ENCODE measurements at regions of chr19 and their contacts with region 1.

Region 1: GRCh38 chr19:17859533-17860330 is at the start of gene RPL18A:
- DNase-seq: peak; percentile 100
- H3K4me3 Mint-ChIP-seq: peak within 1 kb of the TSS; percentile 92
- H3K27ac Mint-ChIP-seq: peak within 1 kb of the TSS; percentile 96
- H3K4me1 Mint-ChIP-seq: peaks cover 37% of the 10 kb centered on the region
- H3K27me3 Mint-ChIP-seq: no peaks in the 10 kb centered on the region
- total RNA-seq, gene RPL18A: 4,021 to 4,160 TPM

Region 2: DNA sequence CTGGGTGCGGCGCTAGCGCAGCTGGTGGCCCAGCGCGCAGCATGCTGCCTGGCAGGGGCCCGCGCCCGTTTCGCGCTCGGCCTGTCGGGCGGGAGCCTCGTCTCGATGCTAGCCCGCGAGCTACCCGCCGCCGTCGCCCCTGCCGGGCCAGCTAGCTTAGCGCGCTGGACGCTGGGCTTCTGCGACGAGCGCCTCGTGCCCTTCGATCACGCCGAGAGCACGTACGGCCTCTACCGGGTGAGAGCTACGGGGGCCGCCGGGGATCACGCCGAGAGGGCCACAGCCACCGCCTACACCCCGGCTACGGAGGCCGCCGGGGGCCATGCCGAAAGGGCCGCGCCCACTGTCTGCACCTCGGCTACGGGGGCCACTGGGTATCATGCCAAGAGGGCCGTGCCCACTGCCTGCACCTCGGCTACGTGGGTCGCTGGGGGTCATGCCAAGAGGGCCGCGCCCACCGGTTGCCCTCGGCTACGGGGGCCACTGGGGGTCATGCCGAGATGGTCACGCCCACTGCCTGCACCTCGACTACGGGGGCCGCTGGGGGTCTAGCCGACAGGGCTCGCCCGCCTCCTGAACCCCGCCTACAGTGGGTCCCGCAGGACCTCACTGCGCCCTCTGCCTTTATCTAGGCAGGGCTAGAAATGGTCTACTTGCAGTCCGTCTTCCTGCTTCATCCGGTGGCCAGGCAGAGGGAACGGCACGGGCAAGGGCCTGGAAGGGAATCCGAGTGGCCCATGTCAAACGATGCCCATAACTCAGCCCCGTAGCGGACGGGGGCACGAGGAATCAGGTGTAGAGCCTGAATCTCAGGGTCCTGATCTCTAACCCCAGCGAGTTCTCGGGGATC is 347.8 kb before region 1 on chr19:
- CTCF ChIA-PET with region 1: no interaction called
- intact Hi-C with region 1: loop called (anchors 5 kb)
- DNase-seq: peak; percentile 85
- H3K4me3 Mint-ChIP-seq: peak overlapping the region; percentile 93
- H3K27ac Mint-ChIP-seq: peak overlapping the region; percentile 73
- H3K4me1 Mint-ChIP-seq: peaks cover 37% of the 10 kb centered on the region
- H3K27me3 Mint-ChIP-seq: no peaks in the 10 kb centered on the region

Region 3: DNA sequence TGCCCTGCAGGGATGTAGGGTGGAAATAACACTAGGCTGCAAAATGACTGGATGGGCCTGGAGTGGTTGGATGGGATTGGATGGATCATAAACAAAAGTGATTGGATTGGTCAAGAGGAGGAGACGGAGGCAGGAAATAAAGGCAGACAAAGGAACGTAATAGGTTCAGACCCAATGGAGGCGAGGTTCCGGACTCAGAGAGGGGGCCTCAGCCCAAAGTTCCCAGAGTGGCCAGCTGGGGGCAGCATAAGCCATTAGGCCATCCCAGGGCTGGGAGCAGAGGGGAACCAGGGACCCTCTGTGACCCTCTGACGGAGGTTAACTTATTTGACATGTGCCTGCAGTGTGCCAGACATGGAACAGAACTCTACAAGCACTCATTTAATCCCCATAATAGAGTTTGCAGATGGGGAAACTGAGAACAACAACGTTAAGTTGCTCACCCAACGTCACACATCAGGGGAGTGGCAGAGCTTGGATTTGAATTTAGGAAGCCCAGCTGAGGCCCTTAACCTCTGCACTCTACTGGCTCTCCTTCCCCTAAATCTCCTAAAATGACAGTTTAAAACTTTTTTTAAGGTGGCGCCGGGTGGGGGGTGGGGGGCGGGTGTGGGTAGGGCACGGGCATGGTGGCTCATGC is 155.8 kb before region 1 on chr19:
- CTCF ChIA-PET with region 1: interaction called, 5 read pairs
- intact Hi-C with region 1: loop called (anchors 1 kb)
- DNase-seq: peak; percentile 82
- H3K4me3 Mint-ChIP-seq: no peak overlapping the region
- H3K27ac Mint-ChIP-seq: no peak overlapping the region
- H3K4me1 Mint-ChIP-seq: no peaks in the 10 kb centered on the region
- H3K27me3 Mint-ChIP-seq: peaks cover 2% of the 10 kb centered on the region

Region 4: GRCh38 chr19:17718947-17719711 is 140.6 kb before region 1 on chr19 and contains the start of gene MAP1S:
- CTCF ChIA-PET with region 1: no interaction called
- intact Hi-C with region 1: no loop called
- DNase-seq: peak; percentile 66
- H3K4me3 Mint-ChIP-seq: peak within 1 kb of the TSS; percentile 84
- H3K27ac Mint-ChIP-seq: peak within 1 kb of the TSS; percentile 76
- H3K4me1 Mint-ChIP-seq: peaks cover 34% of the 10 kb centered on the region
- H3K27me3 Mint-ChIP-seq: no peaks in the 10 kb centered on the region
- total RNA-seq, gene MAP1S: 46.8 to 51.8 TPM

Region 5: DNA sequence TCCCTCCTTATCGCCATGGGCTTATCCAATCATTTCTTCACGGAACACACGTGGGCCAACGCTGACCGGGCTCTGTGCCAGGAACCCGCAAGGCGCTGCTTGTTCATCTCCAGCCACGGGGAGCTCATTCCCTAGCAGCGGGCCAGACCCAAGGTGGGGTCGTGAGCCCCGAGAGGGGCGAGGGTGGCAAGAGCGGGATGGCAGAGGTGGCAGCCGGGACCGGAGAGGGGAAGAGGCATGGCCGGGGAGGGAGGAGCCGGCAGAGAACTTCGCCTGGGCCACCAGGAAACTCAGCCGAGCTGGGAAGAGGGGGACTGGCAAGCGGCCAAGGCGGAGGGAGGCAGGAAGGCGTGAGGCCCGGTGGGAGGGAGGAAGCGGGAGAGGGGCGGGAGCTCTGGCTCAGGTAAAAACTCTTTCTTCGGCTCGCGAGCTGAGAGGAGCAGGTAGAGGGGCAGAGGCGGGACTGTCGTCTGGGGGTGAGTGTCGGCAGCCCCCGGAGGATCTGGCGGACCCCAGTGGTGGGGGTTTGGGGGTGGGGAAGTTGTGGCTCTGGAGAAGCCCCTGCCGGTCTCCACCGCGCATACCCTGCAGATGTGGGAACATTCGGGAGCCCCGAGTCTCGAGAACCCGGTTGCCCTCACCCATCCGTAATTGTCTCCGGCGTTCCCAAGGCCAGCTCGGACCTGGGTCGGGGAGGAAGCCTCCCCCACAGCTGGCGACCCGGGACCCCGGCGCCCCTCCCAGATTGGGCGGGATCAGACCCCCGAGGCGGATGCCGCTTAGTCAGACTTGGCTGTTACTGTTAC is 64.8 kb before region 1 on chr19 and contains the start of gene B3GNT3:
- CTCF ChIA-PET with region 1: interaction called, 5 read pairs
- intact Hi-C with region 1: loop called (anchors 1 kb)
- DNase-seq: no peak
- H3K4me3 Mint-ChIP-seq: peak within 1 kb of the TSS; percentile 21
- H3K27ac Mint-ChIP-seq: no peak within 1 kb of the TSS
- H3K4me1 Mint-ChIP-seq: peaks cover 57% of the 10 kb centered on the region
- H3K27me3 Mint-ChIP-seq: no peaks in the 10 kb centered on the region
- total RNA-seq, gene B3GNT3: 0.17 to 0.19 TPM

Region 6: DNA sequence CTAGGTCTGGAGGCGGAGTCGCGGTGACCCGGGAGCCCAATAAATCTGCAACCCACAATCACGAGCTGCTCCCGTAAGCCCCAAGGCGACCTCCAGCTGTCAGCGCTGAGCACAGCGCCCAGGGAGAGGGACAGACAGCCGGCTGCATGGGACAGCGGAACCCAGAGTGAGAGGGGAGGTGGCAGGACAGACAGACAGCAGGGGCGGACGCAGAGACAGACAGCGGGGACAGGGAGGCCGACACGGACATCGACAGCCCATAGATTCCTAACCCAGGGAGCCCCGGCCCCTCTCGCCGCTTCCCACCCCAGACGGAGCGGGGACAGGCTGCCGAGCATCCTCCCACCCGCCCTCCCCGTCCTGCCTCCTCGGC is 12.1 kb after region 1 on chr19 and contains the start of gene SLC5A5:
- CTCF ChIA-PET with region 1: interaction called, 30 read pairs
- intact Hi-C with region 1: loop called (anchors 1 kb)
- DNase-seq: peak; percentile 49
- H3K4me3 Mint-ChIP-seq: peak within 1 kb of the TSS; percentile 81
- H3K27ac Mint-ChIP-seq: peak within 1 kb of the TSS; percentile 46
- H3K4me1 Mint-ChIP-seq: peaks cover 15% of the 10 kb centered on the region
- H3K27me3 Mint-ChIP-seq: no peaks in the 10 kb centered on the region
- total RNA-seq, gene SLC5A5: 1.1 to 1.2 TPM

Region 7: DNA sequence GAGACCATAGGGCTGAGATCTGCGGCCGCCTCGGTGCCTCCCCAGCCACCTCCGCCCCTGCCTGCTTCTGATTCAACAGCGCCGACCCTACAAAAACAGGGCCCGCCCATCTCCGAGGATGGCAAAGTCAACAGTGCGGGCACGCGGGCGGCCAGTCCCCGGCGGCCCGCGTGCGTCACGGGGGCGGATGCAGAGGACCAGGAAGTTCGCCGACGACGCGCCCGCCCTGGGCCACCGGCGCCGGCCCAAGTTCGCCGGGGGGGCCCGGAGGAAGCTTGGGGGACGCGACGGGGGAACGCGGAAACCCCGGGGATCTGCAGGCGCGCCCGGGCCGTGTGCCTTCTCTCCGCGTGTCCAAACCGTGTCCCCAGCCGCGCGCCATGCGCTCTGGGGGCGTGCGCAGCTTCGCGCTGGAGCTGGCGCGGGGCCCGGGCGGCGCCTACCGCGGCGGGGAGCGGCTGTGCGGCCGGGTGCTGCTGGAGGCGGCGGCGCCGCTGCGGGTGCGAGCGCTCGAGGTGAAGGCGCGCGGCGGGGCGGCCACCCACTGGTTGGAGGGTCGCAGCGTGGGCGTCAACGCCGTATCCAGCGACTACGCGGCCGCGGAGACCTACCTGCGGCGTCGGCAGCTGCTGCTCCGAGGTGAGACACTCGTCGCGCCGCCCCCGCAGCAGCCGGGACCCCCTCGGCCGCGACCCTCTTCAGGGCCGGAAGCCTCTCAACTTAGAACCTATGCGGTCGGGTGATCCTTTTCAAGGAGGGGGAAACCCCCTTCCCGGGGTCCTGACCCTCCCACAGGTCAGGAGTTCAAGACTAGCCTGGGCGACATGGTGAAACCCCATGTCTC is 141.4 kb after region 1 on chr19:
- CTCF ChIA-PET with region 1: interaction called, 11 read pairs
- intact Hi-C with region 1: loop called (anchors 1 kb)
- DNase-seq: peak; percentile 95
- H3K4me3 Mint-ChIP-seq: peak overlapping the region; percentile 87
- H3K27ac Mint-ChIP-seq: peak overlapping the region; percentile 97
- H3K4me1 Mint-ChIP-seq: peaks cover 19% of the 10 kb centered on the region
- H3K27me3 Mint-ChIP-seq: no peaks in the 10 kb centered on the region

Region 8: GRCh38 chr19:18117692-18118378 is 258.1 kb after region 1 on chr19:
- CTCF ChIA-PET with region 1: no interaction called
- intact Hi-C with region 1: no loop called
- DNase-seq: peak; percentile 94
- H3K4me3 Mint-ChIP-seq: peak overlapping the region; percentile 73
- H3K27ac Mint-ChIP-seq: peak overlapping the region; percentile 37
- H3K4me1 Mint-ChIP-seq: peaks cover 32% of the 10 kb centered on the region
- H3K27me3 Mint-ChIP-seq: no peaks in the 10 kb centered on the region

Measured in activated naive CD4-positive, alpha-beta T cell treated with anti-CD3 and anti-CD28 coated beads for 36 hours (primary cell).